ENCODE measurements at regions of chr11 and their contacts with region 1.

Region 1: DNA sequence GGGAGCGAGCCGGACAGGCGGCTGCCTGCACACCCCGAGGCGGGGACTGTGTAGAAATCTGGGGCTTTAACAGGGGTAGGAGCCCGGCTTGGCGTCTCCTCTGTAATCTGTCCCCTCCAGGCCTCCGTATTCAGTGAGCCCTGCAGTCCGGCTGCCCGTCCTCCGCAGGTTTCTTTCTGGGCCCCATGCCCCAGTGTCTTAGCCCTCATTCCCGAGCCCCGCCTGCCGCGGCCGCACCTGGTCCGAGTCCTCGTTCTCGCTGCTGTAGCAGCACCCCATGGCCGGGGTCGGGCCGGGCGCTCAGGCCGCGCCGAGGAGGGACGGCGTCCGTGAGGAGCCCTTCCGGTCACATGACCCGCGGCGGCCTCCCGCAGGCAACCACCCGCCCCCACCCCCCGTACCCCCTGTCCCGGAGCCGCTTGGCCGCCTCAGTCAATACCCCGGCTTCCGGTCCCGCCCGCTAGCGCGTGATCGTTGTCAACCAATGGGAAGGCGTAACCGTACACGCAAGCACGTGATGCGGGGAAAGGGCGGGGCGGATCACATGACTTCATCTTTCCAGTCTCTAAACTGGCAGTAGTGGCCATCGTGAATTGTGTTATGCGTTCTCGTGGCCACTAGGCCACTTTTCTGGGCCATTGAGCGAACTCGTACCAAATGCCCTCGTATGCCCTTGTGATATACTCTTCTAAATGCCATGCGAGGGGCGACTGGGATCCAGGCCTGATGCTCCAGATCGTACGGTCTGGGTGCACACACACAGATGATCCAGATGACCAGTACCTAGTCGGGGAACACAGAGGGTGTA is at the start of gene LAMTOR1:
- DNase-seq: peak; percentile 94 to 99 (median 95)
- H3K4me3 ChIP-seq: peak within 1 kb of the TSS; percentile 75 to 93
- H3K4me3 Mint-ChIP-seq: peak within 1 kb of the TSS; percentile 80 to 95 (median 86)
- H3K27ac ChIP-seq: peak within 1 kb of the TSS; percentile 90
- H3K27ac Mint-ChIP-seq: peak within 1 kb of the TSS; percentile 89 to 95 (median 95)
- H3K4me1 ChIP-seq: peaks cover 32% of the 10 kb centered on the region
- H3K4me1 Mint-ChIP-seq: peaks cover 28 to 47% (median 38%) of the 10 kb centered on the region in 4 donors
- H3K27me3 ChIP-seq: no peaks in the 10 kb centered on the region
- H3K27me3 Mint-ChIP-seq: no peaks in the 10 kb centered on the region
- total RNA-seq, gene LAMTOR1: 66.8 to 68.6 TPM

Region 2: DNA sequence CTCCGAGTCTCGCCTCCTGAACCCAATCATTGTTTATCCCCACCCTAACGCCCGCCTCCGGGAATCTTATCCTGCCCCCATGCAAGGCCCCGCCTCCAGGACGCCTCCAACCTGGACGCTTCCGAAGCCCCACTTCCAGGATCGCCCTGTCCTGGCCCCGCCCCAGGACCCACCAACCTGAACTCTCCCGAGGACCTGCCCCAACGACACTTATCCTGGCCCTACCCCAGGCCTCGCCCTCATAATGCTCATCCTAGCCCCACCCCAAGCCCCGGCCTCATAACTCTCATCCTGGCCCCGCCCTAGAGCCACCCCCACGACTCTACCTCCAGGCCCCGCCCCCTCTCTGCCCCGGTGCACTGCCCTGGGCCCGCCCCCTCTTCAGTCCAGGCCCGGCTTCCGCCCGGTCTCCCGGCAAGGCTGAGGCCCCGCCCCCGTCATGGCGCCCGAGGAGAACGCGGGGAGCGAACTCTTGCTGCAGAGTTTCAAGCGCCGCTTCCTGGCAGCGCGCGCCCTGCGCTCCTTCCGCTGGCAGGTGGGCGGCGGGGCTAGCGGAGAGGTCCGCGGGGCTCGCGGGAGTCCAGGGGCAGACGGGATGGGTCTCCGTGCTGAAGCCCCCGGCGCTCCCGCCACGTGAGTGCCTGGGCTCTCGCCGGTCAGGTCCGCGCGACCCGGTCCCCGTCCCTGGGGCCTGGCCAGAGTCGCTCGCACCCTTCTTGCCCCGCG is 315.9 kb before region 1 on chr11:
- CTCF ChIA-PET with region 1: no interaction called
- POLR2A ChIA-PET with region 1: no interaction called
- intact Hi-C with region 1: loop called (anchors 10 kb)
- DNase-seq: peak; percentile 89 to 97 (median 95)
- H3K4me3 ChIP-seq: peak overlapping the region in 1 of 2 donors; percentile 91
- H3K4me3 Mint-ChIP-seq: peak overlapping the region; percentile 93 to 99 (median 96)
- H3K27ac ChIP-seq: peak overlapping the region; percentile 65
- H3K27ac Mint-ChIP-seq: peak overlapping the region; percentile 87 to 100 (median 99)
- H3K4me1 ChIP-seq: peaks cover 3% of the 10 kb centered on the region
- H3K4me1 Mint-ChIP-seq: peaks cover 10 to 18% (median 13%) of the 10 kb centered on the region in 4 donors
- H3K27me3 ChIP-seq: no peaks in the 10 kb centered on the region
- H3K27me3 Mint-ChIP-seq: no peaks in the 10 kb centered on the region

Region 3: GRCh38 chr11:71928737-71929452 is 174.3 kb before region 1 on chr11 and contains the start of gene RNF121:
- CTCF ChIA-PET with region 1: no interaction called
- POLR2A ChIA-PET with region 1: interaction called, 9 read pairs
- intact Hi-C with region 1: loop called (anchors 1 kb)
- DNase-seq: peak; percentile 96 to 99 (median 96)
- H3K4me3 ChIP-seq: peak within 1 kb of the TSS; percentile 92 to 96
- H3K4me3 Mint-ChIP-seq: peak within 1 kb of the TSS; percentile 95 to 100 (median 98)
- H3K27ac ChIP-seq: peak within 1 kb of the TSS; percentile 84
- H3K27ac Mint-ChIP-seq: peak within 1 kb of the TSS; percentile 92 to 100 (median 99)
- H3K4me1 ChIP-seq: peaks cover 41% of the 10 kb centered on the region
- H3K4me1 Mint-ChIP-seq: peaks cover 40 to 60% (median 50%) of the 10 kb centered on the region in 4 donors
- H3K27me3 ChIP-seq: no peaks in the 10 kb centered on the region
- H3K27me3 Mint-ChIP-seq: no peaks in the 10 kb centered on the region
- total RNA-seq, gene RNF121: 28.0 to 33.0 TPM

Region 4: DNA sequence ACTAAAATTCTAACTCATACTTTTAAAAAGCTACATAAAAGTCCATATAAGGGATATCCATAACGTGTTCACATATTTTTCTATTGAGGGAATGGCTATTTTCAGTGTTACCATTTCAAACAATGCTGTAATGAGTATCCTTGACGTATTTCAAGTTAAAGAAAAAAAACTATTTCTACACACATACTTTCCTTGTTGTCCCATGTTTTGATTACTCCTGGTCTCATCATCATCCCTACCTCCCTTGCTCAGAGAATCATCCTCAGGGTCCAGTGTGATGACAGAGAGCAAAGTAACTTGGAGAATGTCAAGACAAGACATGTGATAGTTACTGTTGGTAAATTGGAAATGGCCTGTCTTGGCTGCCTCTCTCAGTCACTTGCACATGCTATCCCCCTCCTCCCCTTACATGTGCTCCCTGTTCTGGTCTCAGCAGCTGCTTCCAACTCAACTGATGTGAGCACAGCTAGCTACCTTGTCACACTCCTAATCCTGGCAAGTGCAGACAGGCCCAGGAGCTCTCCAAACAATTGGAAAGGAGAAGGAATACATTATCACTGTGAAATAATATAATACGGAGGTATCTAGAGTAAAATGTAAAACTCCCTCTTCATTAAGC is 44.6 kb before region 1 on chr11:
- CTCF ChIA-PET with region 1: no interaction called
- POLR2A ChIA-PET with region 1: no interaction called
- intact Hi-C with region 1: no loop called
- DNase-seq: no peak
- H3K4me3 ChIP-seq: no peak overlapping the region
- H3K4me3 Mint-ChIP-seq: no peak overlapping the region
- H3K27ac ChIP-seq: no peak overlapping the region
- H3K27ac Mint-ChIP-seq: no peak overlapping the region
- H3K4me1 ChIP-seq: no peaks in the 10 kb centered on the region
- H3K4me1 Mint-ChIP-seq: peaks cover 0 to 1% (median 0%) of the 10 kb centered on the region in 4 donors
- H3K27me3 ChIP-seq: no peaks in the 10 kb centered on the region
- H3K27me3 Mint-ChIP-seq: no peaks in the 10 kb centered on the region

Region 5: DNA sequence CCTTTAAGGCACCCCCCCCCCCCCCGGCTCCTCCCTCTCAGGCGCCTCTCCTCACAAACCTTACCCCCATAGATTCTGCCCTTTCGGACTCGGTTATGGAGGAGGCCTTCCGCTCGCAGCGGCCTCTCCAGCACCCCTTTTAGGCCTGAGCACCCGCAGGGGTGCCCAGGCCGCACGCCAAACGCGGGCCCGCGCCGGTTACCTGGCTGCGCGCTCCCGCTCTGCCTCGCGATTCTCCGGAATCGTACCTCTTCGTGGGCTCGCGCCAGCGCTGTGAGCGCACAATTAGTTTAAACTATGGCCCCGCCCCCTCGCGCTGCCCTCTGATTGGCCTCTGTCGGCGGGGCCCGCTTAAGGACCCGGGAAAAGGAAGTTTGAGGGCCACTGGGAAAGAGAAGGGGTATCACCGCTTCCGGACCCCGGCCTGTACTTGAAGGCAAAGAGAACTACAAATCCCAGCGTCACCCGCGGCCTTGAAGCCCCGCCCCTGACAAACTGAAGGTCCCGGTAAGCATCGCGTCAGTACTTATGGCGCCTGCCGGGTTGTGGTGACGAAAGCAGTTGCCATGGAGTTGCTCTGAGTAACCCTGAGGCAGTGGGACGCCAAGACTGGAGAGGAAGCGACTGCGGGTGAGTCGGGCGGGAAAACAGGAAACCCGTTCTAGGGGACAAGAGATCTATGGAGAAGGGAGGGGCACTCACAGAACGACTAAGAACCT is 22.7 kb before region 1 on chr11 and contains the starts of genes LRRC51 and NUMA1:
- CTCF ChIA-PET with region 1: interaction called, 7 read pairs
- POLR2A ChIA-PET with region 1: interaction called, 10 read pairs
- intact Hi-C with region 1: loop called (anchors 1 kb)
- DNase-seq: peak; percentile 98 to 100 (median 99)
- H3K4me3 ChIP-seq: peak within 1 kb of the TSS; percentile 74 to 79
- H3K4me3 Mint-ChIP-seq: peak within 1 kb of the TSS; percentile 89 to 96 (median 93)
- H3K27ac ChIP-seq: peak within 1 kb of the TSS; percentile 75
- H3K27ac Mint-ChIP-seq: peak within 1 kb of the TSS; percentile 91 to 100 (median 99)
- H3K4me1 ChIP-seq: peaks cover 27% of the 10 kb centered on the region
- H3K4me1 Mint-ChIP-seq: peaks cover 31 to 53% (median 38%) of the 10 kb centered on the region in 4 donors
- H3K27me3 ChIP-seq: no peaks in the 10 kb centered on the region
- H3K27me3 Mint-ChIP-seq: no peaks in the 10 kb centered on the region
- total RNA-seq, gene LRRC51: 4.2 to 4.5 TPM
- total RNA-seq, gene NUMA1: 376 to 380 TPM

Region 6: DNA sequence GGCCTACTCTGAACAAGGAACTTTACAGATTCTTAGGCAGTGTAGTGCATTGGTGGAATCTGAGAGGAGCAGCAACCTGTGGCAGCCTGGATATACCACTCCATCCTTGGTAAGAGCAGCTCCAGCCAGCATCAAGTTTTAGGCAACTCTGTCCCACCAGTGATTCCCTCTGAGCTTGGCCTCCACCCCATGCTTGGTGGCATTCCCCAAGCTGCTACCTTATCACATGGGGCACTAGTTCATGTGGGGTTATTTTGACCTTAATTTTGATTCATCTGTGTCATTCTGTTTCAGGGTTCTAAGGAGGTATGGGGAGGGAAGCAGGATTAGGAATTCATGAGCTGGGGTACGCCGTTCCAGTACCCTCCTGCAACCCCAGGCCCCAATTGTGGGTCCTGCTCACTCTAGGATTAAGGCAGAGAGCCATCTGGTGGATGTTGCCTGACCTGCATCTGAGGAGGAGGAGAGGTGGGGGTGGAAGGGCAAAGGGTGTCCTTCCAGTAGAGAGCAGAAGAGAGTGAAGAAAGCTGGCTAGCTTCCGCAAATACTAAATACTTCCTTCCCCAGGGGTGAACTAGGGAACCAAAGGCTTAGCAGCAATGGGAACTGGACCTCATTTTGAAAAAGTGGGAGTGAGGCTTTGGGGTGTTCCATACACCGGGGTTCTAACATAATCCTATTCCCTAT is 12.0 kb before region 1 on chr11:
- CTCF ChIA-PET with region 1: interaction called, 22 read pairs
- POLR2A ChIA-PET with region 1: interaction called, 5 read pairs
- intact Hi-C with region 1: no loop called
- DNase-seq: peak; percentile 57 to 80 (median 66)
- H3K4me3 ChIP-seq: no peak overlapping the region
- H3K4me3 Mint-ChIP-seq: no peak overlapping the region
- H3K27ac ChIP-seq: no peak overlapping the region
- H3K27ac Mint-ChIP-seq: peak overlapping the region; percentile 10 to 91 (median 81)
- H3K4me1 ChIP-seq: no peaks in the 10 kb centered on the region
- H3K4me1 Mint-ChIP-seq: peaks cover 4 to 11% (median 9%) of the 10 kb centered on the region in 4 donors
- H3K27me3 ChIP-seq: no peaks in the 10 kb centered on the region
- H3K27me3 Mint-ChIP-seq: no peaks in the 10 kb centered on the region

Region 7: DNA sequence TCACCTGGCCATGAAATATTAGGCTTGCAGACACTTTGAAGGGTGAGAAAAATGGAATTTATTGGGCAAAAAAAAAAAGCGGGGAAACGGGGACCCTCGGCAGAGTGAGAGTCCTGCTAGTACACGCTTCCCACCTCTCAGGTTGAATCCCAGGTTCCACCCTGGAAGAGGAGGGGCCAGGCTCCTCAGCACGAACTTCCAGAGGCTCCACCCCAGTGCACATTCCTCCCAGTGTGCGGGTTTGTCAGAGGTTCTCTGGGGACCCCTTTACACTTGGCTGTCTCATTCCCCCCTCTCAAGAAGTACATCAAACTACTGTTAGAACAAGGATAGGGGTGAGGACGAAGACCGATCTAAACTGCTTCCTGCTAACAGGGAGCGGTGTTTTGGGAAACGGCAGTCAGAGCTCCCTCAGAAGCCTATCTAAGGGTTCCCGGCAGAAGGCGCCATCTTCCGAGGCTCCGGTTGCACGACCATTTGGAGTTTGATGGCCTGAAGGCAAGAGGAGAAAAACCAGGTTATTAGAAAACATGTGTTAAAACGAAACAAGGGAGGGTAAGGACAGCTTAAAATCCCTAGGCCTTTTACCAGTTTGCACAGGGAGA is 59.8 kb after region 1 on chr11:
- CTCF ChIA-PET with region 1: no interaction called
- POLR2A ChIA-PET with region 1: no interaction called
- intact Hi-C with region 1: no loop called
- DNase-seq: no peak
- H3K4me3 ChIP-seq: no peak overlapping the region
- H3K4me3 Mint-ChIP-seq: no peak overlapping the region
- H3K27ac ChIP-seq: no peak overlapping the region
- H3K27ac Mint-ChIP-seq: no peak overlapping the region
- H3K4me1 ChIP-seq: no peaks in the 10 kb centered on the region
- H3K4me1 Mint-ChIP-seq: no peaks in the 10 kb centered on the region
- H3K27me3 ChIP-seq: no peaks in the 10 kb centered on the region
- H3K27me3 Mint-ChIP-seq: peaks cover 20 to 22% of the 10 kb centered on the region in 2 donors

Measured in CD4-positive, alpha-beta memory T cell (primary cell).